ENCODE measurements at regions of chr9 and their contacts with region 1.

Region 1: DNA sequence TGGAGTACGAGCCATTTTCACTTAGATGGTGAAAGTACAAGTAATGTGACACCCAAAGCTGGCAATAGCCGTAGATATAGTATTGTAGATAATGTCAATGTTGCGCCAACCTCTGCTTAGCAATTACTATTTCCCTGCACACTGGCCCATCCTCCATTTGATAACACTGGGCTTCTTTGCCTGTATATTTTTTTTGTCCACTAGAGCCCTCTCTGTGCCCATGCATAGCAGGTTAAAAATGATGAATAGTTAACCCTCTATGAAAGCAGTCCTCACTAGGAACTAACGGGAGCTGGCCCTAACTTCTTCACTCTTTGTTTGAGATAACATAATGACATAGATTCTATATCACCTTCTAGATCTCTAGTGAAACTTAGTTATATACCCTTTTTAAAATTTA is 416.8 kb downstream of the TUSC1 start:
- DNase-seq: no peak
- H3K4me3 ChIP-seq: no peak overlapping the region
- H3K4me3 Mint-ChIP-seq: no peak overlapping the region
- H3K27ac ChIP-seq: no peak overlapping the region
- H3K27ac Mint-ChIP-seq: no peak overlapping the region
- H3K4me1 ChIP-seq: no peaks in the 10 kb centered on the region
- H3K4me1 Mint-ChIP-seq: no peaks in the 10 kb centered on the region
- H3K27me3 ChIP-seq: no peaks in the 10 kb centered on the region
- H3K27me3 Mint-ChIP-seq: no peaks in the 10 kb centered on the region
- CTCF ChIP-seq: no peak

Region 2: DNA sequence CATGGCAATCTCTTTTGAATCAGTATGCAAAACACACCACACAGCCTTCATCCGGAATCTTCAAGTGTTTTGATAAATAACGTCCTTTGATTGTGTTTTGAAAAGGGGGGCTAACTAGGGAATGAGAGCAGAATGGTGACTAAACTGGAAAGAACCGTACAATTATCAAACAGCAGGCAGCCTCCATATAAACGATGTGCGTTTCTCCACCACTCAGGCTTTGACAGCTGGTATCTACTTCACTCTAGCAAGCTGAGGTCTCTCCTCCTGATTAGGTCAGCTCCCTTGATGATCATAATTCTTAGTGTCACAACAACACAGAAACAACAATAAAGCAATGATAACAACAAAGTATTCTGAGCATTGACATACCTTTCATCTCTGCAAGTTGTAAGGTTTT is 49.1 kb before region 1 on chr9:
- intact Hi-C with region 1: loop called in 1 of 2 experiments (anchors 10 kb)
- DNase-seq: no peak
- H3K4me3 ChIP-seq: no peak overlapping the region
- H3K4me3 Mint-ChIP-seq: no peak overlapping the region
- H3K27ac ChIP-seq: no peak overlapping the region
- H3K27ac Mint-ChIP-seq: no peak overlapping the region
- H3K4me1 ChIP-seq: no peaks in the 10 kb centered on the region
- H3K4me1 Mint-ChIP-seq: no peaks in the 10 kb centered on the region
- H3K27me3 ChIP-seq: no peaks in the 10 kb centered on the region
- H3K27me3 Mint-ChIP-seq: no peaks in the 10 kb centered on the region
- CTCF ChIP-seq: no peak

Region 3: GRCh38 chr9:25353783-25354182 is 92.3 kb after region 1 on chr9:
- intact Hi-C with region 1: no loop called
- DNase-seq: no peak
- H3K4me3 ChIP-seq: no peak overlapping the region
- H3K4me3 Mint-ChIP-seq: no peak overlapping the region
- H3K27ac ChIP-seq: no peak overlapping the region
- H3K27ac Mint-ChIP-seq: no peak overlapping the region
- H3K4me1 ChIP-seq: no peaks in the 10 kb centered on the region
- H3K4me1 Mint-ChIP-seq: no peaks in the 10 kb centered on the region
- H3K27me3 ChIP-seq: no peaks in the 10 kb centered on the region
- H3K27me3 Mint-ChIP-seq: no peaks in the 10 kb centered on the region
- CTCF ChIP-seq: no peak

Measured in CD14-positive monocyte (primary cell).